ENCODE measurements at regions of chr7 and their contacts with region 1.

Region 1: GRCh38 chr7:35519971-35520809 is 174.7 kb downstream of the HERPUD2 start:
- DNase-seq: peak; percentile 36 to 50 (median 48)
- H3K4me3 ChIP-seq: no peak overlapping the region
- H3K4me3 Mint-ChIP-seq: peak overlapping the region in 1 of 8 donors; percentile 40
- H3K27ac ChIP-seq: no peak overlapping the region
- H3K27ac Mint-ChIP-seq: peak overlapping the region in 1 of 7 donors; percentile 0
- H3K4me1 ChIP-seq: no peaks in the 10 kb centered on the region
- H3K4me1 Mint-ChIP-seq: peaks cover 0 to 4% (median 4%) of the 10 kb centered on the region in 4 donors
- H3K27me3 ChIP-seq: no peaks in the 10 kb centered on the region
- H3K27me3 Mint-ChIP-seq: peaks cover 3 to 10% of the 10 kb centered on the region in 2 donors

Region 2: DNA sequence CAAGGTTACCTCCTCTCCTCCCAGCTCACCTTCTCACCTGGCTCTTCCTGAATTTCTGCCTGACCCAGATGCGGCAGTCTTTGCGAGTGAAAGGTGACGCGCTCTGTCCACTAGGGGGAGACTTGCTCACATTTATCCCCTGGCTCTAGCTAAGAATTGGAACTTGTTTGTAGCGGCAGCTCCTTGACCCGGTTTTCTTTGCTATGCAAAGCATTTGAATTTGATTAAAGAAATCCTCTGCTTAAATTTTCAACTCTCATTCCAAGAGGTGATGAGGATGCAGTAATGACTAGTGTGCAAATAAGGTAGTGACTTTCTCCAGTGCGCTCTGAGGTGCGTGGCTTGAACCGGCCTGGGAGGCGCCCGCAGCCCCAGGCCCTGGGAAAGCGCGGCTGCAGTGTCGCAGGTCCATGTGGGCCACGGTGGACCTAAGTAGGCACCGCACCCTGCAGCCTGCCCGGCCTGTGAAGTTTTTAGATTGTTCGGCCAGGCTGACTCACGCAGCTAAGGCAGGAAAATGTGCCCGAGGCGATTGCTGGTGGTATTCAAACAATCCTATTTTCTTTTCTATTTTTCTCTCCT is 1199.1 kb before region 1 on chr7:
- CTCF ChIA-PET with region 1: interaction called, 4 read pairs
- POLR2A ChIA-PET with region 1: no interaction called
- intact Hi-C with region 1: loop called (anchors 5 kb)
- DNase-seq: peak in 4 of 5 donors; percentile 23 to 36 (median 34)
- H3K4me3 ChIP-seq: no peak overlapping the region
- H3K4me3 Mint-ChIP-seq: peak overlapping the region in 5 of 8 donors; percentile 12 to 77 (median 75)
- H3K27ac ChIP-seq: no peak overlapping the region
- H3K27ac Mint-ChIP-seq: no peak overlapping the region
- H3K4me1 ChIP-seq: no peaks in the 10 kb centered on the region
- H3K4me1 Mint-ChIP-seq: peaks cover 4 to 5% (median 5%) of the 10 kb centered on the region in 4 donors
- H3K27me3 ChIP-seq: no peaks in the 10 kb centered on the region
- H3K27me3 Mint-ChIP-seq: peaks cover 6 to 11% of the 10 kb centered on the region in 2 donors

Region 3: DNA sequence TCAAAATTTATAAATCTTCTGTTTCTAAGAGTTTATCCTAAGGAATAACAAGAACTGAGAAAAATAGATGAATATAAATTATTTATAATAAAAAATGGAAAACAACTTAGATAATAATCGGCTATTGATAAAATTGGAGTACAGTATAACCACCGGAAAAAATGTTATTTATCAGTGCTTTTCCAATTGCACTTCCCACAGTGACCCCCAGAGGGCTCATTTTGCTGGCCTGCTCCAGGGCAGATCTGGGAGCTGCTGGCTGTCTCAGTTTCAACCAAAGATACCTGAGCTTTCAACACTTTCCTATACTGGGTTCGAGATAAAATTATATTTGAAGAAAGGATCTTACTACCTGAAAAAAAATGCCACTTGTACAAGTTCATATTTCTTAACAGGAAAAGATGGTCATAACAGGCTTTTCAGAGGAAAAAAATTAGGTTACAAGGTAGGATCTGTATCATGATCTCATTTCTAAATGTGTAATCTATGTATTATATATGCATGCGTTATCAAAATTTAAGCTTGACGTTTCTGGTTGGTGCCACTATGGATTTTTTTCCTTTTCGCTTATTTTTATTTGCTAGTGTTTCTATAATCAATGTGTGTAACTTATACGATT is 696.4 kb before region 1 on chr7:
- CTCF ChIA-PET with region 1: interaction called, 6 read pairs
- POLR2A ChIA-PET with region 1: no interaction called
- intact Hi-C with region 1: loop called (anchors 2 kb)
- DNase-seq: peak; percentile 22 to 55 (median 36)
- H3K4me3 ChIP-seq: no peak overlapping the region
- H3K4me3 Mint-ChIP-seq: no peak overlapping the region
- H3K27ac ChIP-seq: no peak overlapping the region
- H3K27ac Mint-ChIP-seq: no peak overlapping the region
- H3K4me1 ChIP-seq: no peaks in the 10 kb centered on the region
- H3K4me1 Mint-ChIP-seq: no peaks in the 10 kb centered on the region
- H3K27me3 ChIP-seq: no peaks in the 10 kb centered on the region
- H3K27me3 Mint-ChIP-seq: no peaks in the 10 kb centered on the region

Measured in CD4-positive, alpha-beta memory T cell (primary cell).